ENCODE measurements at regions of chr15 and their contacts with region 1.

Region 1: GRCh38 chr15:80567721-80568157 is 127.4 kb upstream of the ABHD17C start:
- H3K4me3 ChIP-seq: no peak overlapping the region
- H3K27ac ChIP-seq: no peak overlapping the region
- H3K4me1 ChIP-seq: 0 out of 2 replicates have a peak, but pooled peaks cover 4% of the 10 kb centered on the region
- CTCF ChIP-seq: peak; percentile 83; the same call in 1 of the 2 replicates

Region 2: GRCh38 chr15:80502782-80503181 is 65.0 kb before region 1 on chr15:
- CTCF ChIA-PET with region 1: no interaction called
- POLR2A ChIA-PET with region 1: no interaction called
- H3K4me3 ChIP-seq: no peak overlapping the region
- H3K27ac ChIP-seq: no peak overlapping the region
- H3K4me1 ChIP-seq: peaks cover 4% of the 10 kb centered on the region; the same call in 1 of the 2 replicates
- CTCF ChIP-seq: no peak

Region 3: GRCh38 chr15:80551348-80551747 is 16.4 kb before region 1 on chr15:
- CTCF ChIA-PET with region 1: interaction called, 22 read pairs
- POLR2A ChIA-PET with region 1: no interaction called
- H3K4me3 ChIP-seq: no peak overlapping the region
- H3K27ac ChIP-seq: no peak overlapping the region
- H3K4me1 ChIP-seq: no peaks in the 10 kb centered on the region
- CTCF ChIP-seq: no peak

Region 4: GRCh38 chr15:80580106-80580505 is 12.4 kb after region 1 on chr15:
- CTCF ChIA-PET with region 1: interaction called, 17 read pairs
- POLR2A ChIA-PET with region 1: no interaction called
- H3K4me3 ChIP-seq: no peak overlapping the region
- H3K27ac ChIP-seq: no peak overlapping the region
- H3K4me1 ChIP-seq: no peaks in the 10 kb centered on the region
- CTCF ChIP-seq: no peak

Region 5: DNA sequence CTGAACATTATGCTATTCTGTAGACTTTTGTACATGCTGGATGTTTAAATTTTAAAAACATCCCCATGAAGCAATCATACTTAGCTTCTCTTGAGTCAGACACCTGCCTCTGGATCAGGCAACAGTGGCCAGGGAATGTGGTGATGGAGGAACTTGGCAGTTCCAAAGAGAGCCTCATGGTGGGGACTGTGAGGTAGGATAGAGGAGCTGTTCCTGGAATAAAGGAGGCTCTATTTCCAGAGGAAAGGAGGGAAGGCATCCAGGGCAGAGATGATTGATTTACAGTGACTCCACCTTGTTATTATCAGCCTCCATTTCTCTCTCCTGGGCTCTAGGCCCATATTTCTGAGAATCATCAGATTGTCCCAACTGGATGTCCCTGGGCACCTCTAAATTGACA is 92.4 kb after region 1 on chr15:
- CTCF ChIA-PET with region 1: interaction called, 19 read pairs
- POLR2A ChIA-PET with region 1: no interaction called
- H3K4me3 ChIP-seq: no peak overlapping the region
- H3K27ac ChIP-seq: no peak overlapping the region
- H3K4me1 ChIP-seq: no peaks in the 10 kb centered on the region
- CTCF ChIP-seq: 0 out of 2 replicates have a peak, but pooled peaks have one; percentile 18

Region 6: GRCh38 chr15:80695104-80695910 is 127.6 kb after region 1 on chr15 and contains the start of gene ABHD17C:
- CTCF ChIA-PET with region 1: interaction called, 16 read pairs
- POLR2A ChIA-PET with region 1: no interaction called
- H3K4me3 ChIP-seq: peak within 1 kb of the TSS; percentile 56
- H3K27ac ChIP-seq: peak within 1 kb of the TSS; percentile 90
- H3K4me1 ChIP-seq: peaks cover 6% of the 10 kb centered on the region
- CTCF ChIP-seq: no peak

Region 7: DNA sequence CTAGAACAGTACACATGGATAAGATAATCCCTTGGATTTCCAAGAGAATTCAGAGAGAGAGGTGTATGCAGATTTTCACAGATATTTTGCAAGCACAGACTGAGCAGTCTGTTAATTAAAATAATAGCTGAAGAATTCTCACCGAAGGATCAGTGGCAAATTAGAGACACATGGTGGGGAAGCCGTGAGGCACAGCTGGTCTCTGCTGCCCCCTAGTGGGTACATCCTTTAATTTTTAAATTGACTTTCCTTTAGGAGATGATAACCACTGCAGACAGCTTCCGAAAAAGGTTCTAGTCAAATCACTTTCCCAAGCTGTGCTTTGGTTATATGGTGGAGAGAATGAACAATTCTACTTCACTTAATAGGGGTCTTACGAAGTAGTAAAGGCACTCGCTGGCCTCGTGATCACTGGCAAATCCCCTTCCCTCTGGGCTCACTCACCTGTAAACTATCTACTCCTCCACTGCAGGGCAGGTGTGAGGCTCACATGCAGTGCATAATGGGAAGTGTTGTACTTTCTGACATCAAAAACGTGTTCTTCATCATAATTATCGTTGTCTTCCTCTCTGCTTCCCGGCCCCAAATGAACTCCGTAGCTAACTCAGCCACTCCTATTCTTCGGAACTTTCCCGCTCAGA is 402.4 kb after region 1 on chr15:
- CTCF ChIA-PET with region 1: interaction called, 54 read pairs
- POLR2A ChIA-PET with region 1: no interaction called
- H3K4me3 ChIP-seq: no peak overlapping the region
- H3K27ac ChIP-seq: no peak overlapping the region
- H3K4me1 ChIP-seq: no peaks in the 10 kb centered on the region
- CTCF ChIP-seq: peak; percentile 42; the same call in 1 of the 2 replicates

Measured in HEK293 (cell line).